Activated CD4-positive, alpha-beta memory T cell treated with anti-CD3 and anti-CD28 coated beads for 36 hours (primary cell): ENCODE measurements at regions of chr7 and their contacts with region 1.

Region 1: DNA sequence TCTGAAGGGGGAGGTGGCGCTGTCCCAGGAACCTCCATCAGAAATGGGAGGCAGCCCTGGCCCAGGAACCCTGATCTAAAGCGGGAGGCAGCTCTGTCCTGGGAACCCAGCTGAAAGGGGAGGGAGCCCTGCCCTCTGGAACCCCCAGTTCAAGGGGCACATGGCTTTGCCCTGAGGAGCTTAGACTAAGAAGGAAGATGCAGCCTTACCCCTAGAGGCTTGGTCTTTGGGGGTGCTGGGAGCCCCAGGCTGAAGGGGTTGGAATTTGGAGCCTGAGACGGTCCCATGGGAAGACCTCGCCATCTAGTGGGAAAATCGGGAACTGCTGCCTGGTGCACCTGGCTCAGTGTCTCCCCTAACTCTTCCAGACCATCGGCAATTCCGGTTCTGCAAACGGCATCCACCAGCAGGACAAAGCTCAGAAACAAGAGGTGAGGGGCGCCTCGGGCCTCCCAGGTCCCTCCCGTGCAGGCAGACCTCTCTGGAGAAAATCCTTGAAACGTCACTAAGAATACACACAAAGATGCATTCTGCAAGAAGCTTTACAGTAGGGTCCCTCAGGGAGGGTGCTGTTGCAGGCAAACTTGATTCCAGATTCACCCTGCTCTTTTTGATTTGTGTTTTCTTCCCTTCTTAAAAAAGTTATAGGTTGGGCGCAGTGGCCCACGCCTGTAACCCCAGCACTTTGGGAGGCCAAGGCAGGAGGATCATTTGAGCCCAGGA is 52.4 kb upstream of the GTF2IRD1 start:
- DNase-seq: peak; percentile 80
- H3K4me3 Mint-ChIP-seq: no peak overlapping the region
- H3K27ac Mint-ChIP-seq: no peak overlapping the region
- H3K4me1 Mint-ChIP-seq: no peaks in the 10 kb centered on the region
- H3K27me3 Mint-ChIP-seq: no peaks in the 10 kb centered on the region

Region 2: DNA sequence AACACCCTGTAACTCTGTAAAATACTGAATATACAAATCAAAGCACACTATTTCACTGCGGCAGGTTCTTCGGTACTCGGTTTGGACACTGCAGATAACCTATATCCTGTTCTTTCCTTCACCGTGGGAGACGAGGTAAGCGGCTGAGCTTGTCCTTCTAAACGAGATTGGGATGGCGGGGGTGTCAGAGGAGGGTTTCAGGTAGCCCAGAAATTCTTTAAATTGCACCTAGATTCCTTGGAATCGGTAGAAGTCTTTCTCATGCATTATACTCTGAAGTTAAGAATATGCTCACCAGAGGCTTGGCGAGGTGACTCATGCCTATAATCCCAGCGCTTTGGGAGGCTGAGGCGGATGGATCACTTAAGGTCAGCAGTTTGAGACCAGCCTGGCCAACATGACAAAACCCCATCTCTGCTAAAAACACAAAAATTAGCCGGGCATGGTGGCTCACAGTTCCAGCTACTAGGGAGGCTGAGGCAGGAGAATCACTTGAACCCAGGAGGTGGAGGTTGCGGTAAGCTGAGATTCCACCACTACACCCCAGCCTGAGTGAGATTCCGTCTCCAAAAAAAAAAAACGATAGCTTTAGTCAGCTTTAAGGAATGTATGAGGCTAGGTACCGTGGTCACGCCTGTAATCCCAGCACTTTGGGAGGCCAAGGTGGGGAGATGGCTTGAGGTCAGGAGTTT is 201.6 kb before region 1 on chr7:
- CTCF ChIA-PET with region 1: interaction called, 281 read pairs
- POLR2A ChIA-PET with region 1: no interaction called
- intact Hi-C with region 1: no loop called
- DNase-seq: no peak
- H3K4me3 Mint-ChIP-seq: no peak overlapping the region
- H3K27ac Mint-ChIP-seq: no peak overlapping the region
- H3K4me1 Mint-ChIP-seq: no peaks in the 10 kb centered on the region
- H3K27me3 Mint-ChIP-seq: no peaks in the 10 kb centered on the region

Region 3: GRCh38 chr7:74217455-74218342 is 183.6 kb before region 1 on chr7:
- CTCF ChIA-PET with region 1: interaction called, 281 read pairs
- POLR2A ChIA-PET with region 1: no interaction called
- intact Hi-C with region 1: no loop called
- DNase-seq: peak; percentile 36
- H3K4me3 Mint-ChIP-seq: no peak overlapping the region
- H3K27ac Mint-ChIP-seq: no peak overlapping the region
- H3K4me1 Mint-ChIP-seq: peaks cover 14% of the 10 kb centered on the region
- H3K27me3 Mint-ChIP-seq: no peaks in the 10 kb centered on the region

Region 4: DNA sequence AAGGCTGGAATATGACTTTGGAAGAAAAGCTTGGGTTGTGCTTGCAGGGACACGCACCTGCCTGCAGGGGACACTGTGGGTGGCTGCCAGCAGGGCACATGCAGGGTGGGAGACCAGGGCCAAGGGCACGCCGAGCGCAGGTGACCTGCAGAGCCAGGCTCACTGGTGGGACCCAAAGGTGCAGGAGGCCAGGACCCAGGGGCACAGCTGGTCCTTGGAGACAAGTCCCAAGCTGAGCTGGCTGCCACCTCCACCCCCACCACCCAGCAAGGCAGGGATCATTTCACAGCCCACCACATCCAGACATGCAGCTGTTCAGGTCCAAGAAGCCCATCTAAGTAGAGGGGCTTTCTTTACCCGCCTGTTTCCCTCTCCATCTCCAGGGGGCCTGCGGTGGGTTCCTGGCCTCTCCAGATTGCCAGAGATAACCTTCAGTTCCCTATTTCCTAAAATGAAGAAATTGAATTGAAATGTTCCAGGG is 125.9 kb before region 1 on chr7:
- CTCF ChIA-PET with region 1: interaction called, 22 read pairs
- POLR2A ChIA-PET with region 1: no interaction called
- intact Hi-C with region 1: no loop called
- DNase-seq: no peak
- H3K4me3 Mint-ChIP-seq: no peak overlapping the region
- H3K27ac Mint-ChIP-seq: no peak overlapping the region
- H3K4me1 Mint-ChIP-seq: peaks cover 18% of the 10 kb centered on the region
- H3K27me3 Mint-ChIP-seq: peaks cover 7% of the 10 kb centered on the region

Region 5: DNA sequence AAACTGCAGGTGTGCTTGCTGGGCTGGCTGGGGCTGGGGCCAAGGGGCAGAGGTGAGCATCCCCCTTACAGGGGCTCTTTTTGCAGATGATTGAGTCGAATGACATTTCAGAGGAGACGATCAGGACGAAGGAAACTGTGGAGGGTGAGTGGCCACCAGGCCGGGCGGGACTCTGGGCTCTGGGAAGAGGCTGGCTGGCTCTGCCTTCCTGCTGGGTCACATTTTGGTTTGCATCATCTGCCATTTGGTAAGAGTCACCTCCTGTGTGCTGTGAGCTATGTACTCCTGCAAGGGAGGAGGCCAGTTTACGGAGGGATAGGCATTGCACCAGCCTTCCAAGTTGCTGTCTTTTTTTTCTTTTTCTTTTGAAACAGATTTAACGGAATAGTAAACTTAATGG is 20.6 kb before region 1 on chr7:
- CTCF ChIA-PET with region 1: interaction called, 13 read pairs
- POLR2A ChIA-PET with region 1: no interaction called
- intact Hi-C with region 1: no loop called
- DNase-seq: no peak
- H3K4me3 Mint-ChIP-seq: no peak overlapping the region
- H3K27ac Mint-ChIP-seq: no peak overlapping the region
- H3K4me1 Mint-ChIP-seq: no peaks in the 10 kb centered on the region
- H3K27me3 Mint-ChIP-seq: no peaks in the 10 kb centered on the region

Region 6: DNA sequence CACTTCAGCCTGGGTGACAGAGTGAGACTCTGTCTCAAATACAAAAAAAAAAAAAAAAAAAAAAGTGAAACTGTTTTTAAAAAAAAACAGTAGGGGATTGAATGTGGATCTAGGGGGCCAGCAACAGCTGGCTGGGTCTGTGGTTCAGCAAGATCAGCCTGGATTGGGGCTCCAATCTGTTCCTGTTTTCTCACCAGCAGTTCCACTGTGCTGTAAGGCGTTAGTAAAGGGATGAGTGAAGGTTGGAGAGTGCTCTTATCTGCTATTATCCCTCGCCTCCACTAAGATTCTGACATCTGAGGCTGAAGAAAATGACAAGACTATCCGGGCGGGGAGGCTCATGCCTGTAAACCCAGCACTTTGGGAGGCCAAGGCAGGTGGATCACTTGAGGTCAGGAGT is 10.8 kb after region 1 on chr7:
- CTCF ChIA-PET with region 1: interaction called, 26 read pairs
- POLR2A ChIA-PET with region 1: no interaction called
- intact Hi-C with region 1: no loop called
- DNase-seq: no peak
- H3K4me3 Mint-ChIP-seq: no peak overlapping the region
- H3K27ac Mint-ChIP-seq: no peak overlapping the region
- H3K4me1 Mint-ChIP-seq: no peaks in the 10 kb centered on the region
- H3K27me3 Mint-ChIP-seq: no peaks in the 10 kb centered on the region

Region 7: DNA sequence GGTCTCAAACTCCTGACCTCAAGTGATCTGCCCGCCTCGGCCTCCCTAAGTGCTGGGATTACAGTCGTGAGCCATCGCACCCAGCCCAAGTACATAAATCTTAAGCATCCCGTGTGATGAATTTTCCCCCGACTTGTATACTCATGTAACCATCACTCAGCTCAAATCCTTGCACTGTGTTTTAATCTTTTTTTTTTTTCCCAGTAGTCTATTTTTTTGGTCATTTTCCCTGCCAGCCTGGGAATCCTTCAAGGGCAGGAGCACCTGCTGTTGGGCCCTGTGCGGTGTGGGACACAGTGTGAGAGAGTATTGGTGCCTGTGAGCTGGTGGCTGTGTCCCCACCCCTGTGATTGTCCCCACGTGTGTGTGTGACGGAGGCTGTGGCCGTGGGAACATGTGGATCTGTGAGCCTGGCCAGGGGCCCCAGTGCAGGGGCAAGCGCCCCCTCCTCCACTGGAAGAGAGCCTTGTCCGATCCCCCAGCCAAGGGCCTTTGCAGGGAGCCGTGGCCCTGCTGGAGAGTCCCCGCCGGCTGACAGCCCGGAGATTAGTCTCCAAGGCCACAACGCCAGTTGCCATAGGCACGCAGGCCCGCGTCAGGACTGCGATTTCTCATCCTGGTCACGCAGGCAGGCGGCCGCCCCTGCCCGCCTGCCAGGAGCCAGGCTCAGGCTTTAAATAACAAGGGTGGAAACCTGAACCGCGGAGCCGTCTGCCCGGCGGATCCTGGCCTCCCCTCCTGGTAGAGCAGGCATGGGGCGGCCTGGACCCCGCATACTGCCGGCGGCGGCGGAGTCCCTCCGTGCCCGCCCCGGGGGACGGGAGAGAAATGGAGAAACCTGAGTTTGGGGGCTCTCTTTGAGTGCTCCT is 78.9 kb after region 1 on chr7:
- CTCF ChIA-PET with region 1: no interaction called
- POLR2A ChIA-PET with region 1: no interaction called
- intact Hi-C with region 1: no loop called
- DNase-seq: no peak
- H3K4me3 Mint-ChIP-seq: no peak overlapping the region
- H3K27ac Mint-ChIP-seq: no peak overlapping the region
- H3K4me1 Mint-ChIP-seq: no peaks in the 10 kb centered on the region
- H3K27me3 Mint-ChIP-seq: peaks cover 3% of the 10 kb centered on the region